Esophagus muscularis mucosa (tissue), 4 donors: ENCODE measurements at regions of chr11 and their contacts with region 1.

Region 1: GRCh38 chr11:84384731-84385130 is 1098.6 kb upstream of the CCDC90B start:
- DNase-seq: no peak
- H3K4me3 ChIP-seq: no peak overlapping the region
- H3K27ac ChIP-seq: no peak overlapping the region
- H3K4me1 ChIP-seq: peaks cover 0 to 12% (median 7%) of the 10 kb centered on the region in 4 donors
- H3K27me3 ChIP-seq: no peaks in the 10 kb centered on the region
- CTCF ChIP-seq: peak; percentile 67 to 85 (median 67)
- EP300 ChIP-seq: no peak
- POLR2A ChIP-seq: no peak

Region 2: DNA sequence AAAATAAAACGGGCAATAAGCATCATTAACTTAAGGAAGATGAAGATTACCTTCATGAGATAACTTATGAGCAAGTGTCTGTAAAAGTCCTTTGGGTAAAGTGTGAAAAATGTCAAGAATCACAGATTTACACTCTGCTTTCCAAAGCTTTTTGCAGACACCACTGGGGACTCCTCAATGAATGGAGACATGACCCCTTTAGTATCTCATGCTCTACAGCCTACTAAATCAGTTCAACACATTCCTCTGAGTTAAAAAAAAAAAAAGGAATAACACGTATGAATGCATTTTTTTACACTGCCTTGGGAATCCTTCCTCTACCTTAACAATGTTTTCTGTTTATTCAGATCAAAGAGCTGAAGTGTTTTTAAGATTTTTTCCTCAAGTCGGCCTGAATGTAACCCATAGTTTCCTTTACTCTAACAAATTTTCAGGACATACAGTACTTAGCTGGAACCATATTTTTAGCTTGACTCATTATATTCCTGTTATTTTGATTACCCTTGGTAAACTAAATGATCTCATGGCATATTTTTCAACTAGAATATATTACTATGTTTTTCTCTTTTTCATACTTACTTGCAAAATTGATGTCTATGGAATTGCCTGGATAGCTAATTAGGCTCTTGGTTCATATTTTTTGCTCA is 1287.2 kb before region 1 on chr11:
- intact Hi-C with region 1: no loop called
- DNase-seq: no peak
- H3K4me3 ChIP-seq: no peak overlapping the region
- H3K27ac ChIP-seq: no peak overlapping the region
- H3K4me1 ChIP-seq: peaks cover 0 to 9% (median 7%) of the 10 kb centered on the region in 4 donors
- H3K27me3 ChIP-seq: no peaks in the 10 kb centered on the region
- CTCF ChIP-seq: no peak
- EP300 ChIP-seq: no peak
- POLR2A ChIP-seq: no peak

Region 3: DNA sequence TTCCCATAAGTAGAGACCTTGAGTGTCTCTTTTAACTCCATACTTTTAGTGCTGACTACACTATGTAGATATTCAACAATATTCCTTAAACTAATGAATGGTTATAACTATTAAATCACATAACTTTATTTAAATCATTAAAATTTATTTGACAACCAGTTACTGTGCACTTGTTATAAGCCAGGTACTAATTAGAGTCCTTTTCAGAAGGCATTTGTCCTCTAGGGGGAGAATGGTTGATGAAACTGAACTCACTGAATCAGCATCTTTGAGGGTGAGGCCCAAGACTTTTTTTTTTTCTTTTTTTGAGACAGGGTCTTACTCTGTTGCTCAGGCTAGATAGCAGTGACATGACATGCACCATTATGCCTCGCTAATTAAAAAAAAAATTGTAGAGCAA is 583.0 kb before region 1 on chr11:
- intact Hi-C with region 1: no loop called
- DNase-seq: no peak
- H3K4me3 ChIP-seq: no peak overlapping the region
- H3K27ac ChIP-seq: no peak overlapping the region
- H3K4me1 ChIP-seq: no peaks in the 10 kb centered on the region
- H3K27me3 ChIP-seq: no peaks in the 10 kb centered on the region
- CTCF ChIP-seq: no peak
- EP300 ChIP-seq: no peak
- POLR2A ChIP-seq: no peak

Region 4: GRCh38 chr11:83827940-83828554 is 556.7 kb before region 1 on chr11:
- intact Hi-C with region 1: no loop called
- DNase-seq: no peak
- H3K4me3 ChIP-seq: peak overlapping the region; percentile 39 to 53 (median 44)
- H3K27ac ChIP-seq: peak overlapping the region in 1 of 4 donors; percentile 17
- H3K4me1 ChIP-seq: peaks cover 0 to 7% (median 6%) of the 10 kb centered on the region in 4 donors
- H3K27me3 ChIP-seq: no peaks in the 10 kb centered on the region
- CTCF ChIP-seq: peak; percentile 51 to 60 (median 52)
- EP300 ChIP-seq: no peak
- POLR2A ChIP-seq: no peak

Region 5: DNA sequence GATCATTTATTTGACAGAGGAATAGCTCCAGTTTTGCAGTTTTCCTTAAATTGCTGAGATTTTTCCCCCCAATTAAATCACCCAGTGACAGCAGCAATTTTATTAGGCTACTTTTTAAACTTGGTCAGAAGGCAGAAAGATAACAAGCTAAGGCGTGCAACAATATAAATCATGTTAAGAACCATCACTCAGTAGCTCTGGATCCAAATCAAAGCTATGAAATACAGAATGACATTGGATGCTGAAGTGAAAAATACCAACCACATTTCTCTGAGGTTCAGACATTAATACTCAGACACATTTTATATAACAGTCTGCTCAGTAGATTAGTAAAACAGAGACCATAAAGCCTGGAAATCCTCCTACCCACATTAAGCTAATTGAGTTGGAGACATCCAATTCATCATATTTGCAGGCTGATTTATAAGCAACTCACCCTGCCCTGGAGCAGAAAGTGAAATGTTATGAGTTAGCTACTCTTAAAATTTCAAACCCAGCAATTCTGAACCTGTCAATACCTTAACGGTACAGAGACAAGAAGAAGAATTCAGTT is 134.0 kb after region 1 on chr11:
- intact Hi-C with region 1: loop called (anchors 5 kb)
- DNase-seq: no peak
- H3K4me3 ChIP-seq: no peak overlapping the region
- H3K27ac ChIP-seq: no peak overlapping the region
- H3K4me1 ChIP-seq: peaks cover 0 to 18% (median 8%) of the 10 kb centered on the region in 4 donors
- H3K27me3 ChIP-seq: no peaks in the 10 kb centered on the region
- CTCF ChIP-seq: no peak
- EP300 ChIP-seq: no peak
- POLR2A ChIP-seq: no peak